Activated CD4-positive, alpha-beta memory T cell treated with anti-CD3 and anti-CD28 coated beads for 36 hours (primary cell): ENCODE measurements at regions of chr7 and their contacts with region 1.

Region 1: GRCh38 chr7:7681179-7681935 is 37.0 kb downstream of the RPA3 start:
- DNase-seq: no peak
- H3K4me3 Mint-ChIP-seq: no peak overlapping the region
- H3K27ac Mint-ChIP-seq: peak overlapping the region; percentile 52
- H3K4me1 Mint-ChIP-seq: peaks cover 30% of the 10 kb centered on the region
- H3K27me3 Mint-ChIP-seq: no peaks in the 10 kb centered on the region

Region 2: DNA sequence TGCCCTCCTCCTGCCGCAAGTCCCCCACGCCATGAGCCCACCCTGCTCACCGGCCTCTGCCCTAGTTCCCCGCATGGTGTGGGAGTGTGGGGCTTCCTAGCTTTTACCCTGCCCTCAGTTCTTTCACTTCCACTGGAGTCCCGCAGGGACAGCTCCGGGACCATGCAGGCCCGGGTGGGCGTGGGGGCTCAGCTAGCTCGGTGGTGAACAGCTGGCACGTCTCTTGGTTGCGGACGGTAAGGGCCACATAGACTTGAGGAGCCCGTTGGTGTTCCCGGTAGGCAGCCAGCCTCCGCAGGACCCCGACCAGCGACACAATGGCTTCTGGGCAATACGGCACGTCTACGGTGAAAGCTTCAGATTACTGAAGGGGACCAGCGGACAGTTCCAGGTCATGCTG is 746.4 kb before region 1 on chr7:
- CTCF ChIA-PET with region 1: no interaction called
- POLR2A ChIA-PET with region 1: no interaction called
- intact Hi-C with region 1: no loop called
- DNase-seq: no peak
- H3K4me3 Mint-ChIP-seq: no peak overlapping the region
- H3K27ac Mint-ChIP-seq: no peak overlapping the region
- H3K4me1 Mint-ChIP-seq: peaks cover 8% of the 10 kb centered on the region
- H3K27me3 Mint-ChIP-seq: no peaks in the 10 kb centered on the region

Region 3: DNA sequence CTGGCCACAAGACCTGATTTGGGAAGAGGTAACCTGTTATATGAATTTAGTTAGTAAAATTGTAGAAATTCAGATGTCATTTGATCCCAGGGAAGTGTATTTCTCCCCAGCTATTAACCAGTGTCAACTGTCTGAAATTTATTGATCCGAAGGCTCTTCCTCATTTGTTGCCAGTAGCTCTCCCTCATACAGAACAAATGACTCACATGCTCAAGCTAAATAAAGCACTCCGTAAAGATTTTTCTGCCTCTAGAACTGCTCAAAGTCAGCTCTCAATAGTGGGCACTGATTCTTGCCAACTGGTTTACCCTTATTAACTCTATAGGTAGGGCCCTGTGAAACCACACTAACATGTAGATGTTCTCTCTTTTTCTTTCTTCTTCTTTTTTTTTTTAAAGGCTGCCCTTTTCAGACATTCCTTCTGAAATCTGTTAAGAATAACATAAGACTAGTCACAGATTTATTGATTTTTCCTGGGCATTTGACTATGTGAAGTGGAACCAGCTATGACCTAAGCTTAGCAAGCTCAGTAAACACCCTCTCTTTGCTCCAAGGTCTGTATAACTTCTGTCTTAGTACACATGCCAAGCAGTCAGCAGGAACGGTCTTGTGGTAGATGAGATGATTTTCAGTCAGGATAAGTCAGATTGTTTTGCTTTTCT is 15.2 kb after region 1 on chr7:
- CTCF ChIA-PET with region 1: interaction called, 12 read pairs
- POLR2A ChIA-PET with region 1: no interaction called
- intact Hi-C with region 1: no loop called
- DNase-seq: no peak
- H3K4me3 Mint-ChIP-seq: no peak overlapping the region
- H3K27ac Mint-ChIP-seq: no peak overlapping the region
- H3K4me1 Mint-ChIP-seq: peaks cover 7% of the 10 kb centered on the region
- H3K27me3 Mint-ChIP-seq: no peaks in the 10 kb centered on the region

Region 4: DNA sequence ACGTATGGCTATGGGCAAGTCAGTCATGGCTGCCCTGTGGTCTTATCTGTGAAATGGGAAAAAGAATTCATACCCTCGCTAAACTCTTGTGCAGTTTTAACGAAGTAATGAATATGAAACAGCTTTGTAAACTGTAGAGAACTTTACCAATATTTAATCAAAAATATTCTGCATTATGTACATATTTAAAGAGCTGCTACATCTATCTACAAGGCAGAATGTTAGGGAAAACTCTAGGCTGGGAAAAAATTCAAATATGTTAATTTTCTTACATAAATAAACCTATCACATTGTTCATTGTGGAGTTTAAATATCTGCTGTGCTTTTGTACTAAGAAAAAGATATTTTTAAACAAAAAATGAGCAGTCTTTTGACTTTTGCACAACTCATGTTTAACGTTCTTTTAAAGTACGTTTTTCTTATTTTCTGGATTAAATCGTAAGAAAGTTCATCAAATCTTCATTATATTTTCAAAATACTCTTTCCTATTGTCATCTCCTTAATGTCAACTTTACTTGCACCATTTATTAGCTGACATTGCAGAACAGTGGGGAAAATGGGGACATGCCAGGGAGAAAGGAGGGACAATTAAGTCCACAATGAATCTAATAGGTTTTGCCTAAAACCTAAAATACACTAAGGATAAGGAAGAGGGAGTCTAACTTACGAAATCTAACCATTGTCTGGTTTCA is 523.1 kb after region 1 on chr7:
- CTCF ChIA-PET with region 1: no interaction called
- POLR2A ChIA-PET with region 1: no interaction called
- intact Hi-C with region 1: no loop called
- DNase-seq: no peak
- H3K4me3 Mint-ChIP-seq: no peak overlapping the region
- H3K27ac Mint-ChIP-seq: no peak overlapping the region
- H3K4me1 Mint-ChIP-seq: no peaks in the 10 kb centered on the region
- H3K27me3 Mint-ChIP-seq: no peaks in the 10 kb centered on the region